SK-N-SH (cell line): ENCODE measurements at regions of chr20 and their contacts with region 1.

Region 1: GRCh38 chr20:5543385-5543784 is 206.8 kb upstream of the SHLD1 start:
- DNase-seq: no peak
- H3K4me3 ChIP-seq: no peak overlapping the region
- H3K27ac ChIP-seq: no peak overlapping the region
- H3K4me1 ChIP-seq: no peaks in the 10 kb centered on the region; a peak in 2 of 4 replicates
- H3K27me3 ChIP-seq: no peaks in the 10 kb centered on the region
- CTCF ChIP-seq: no peak
- EP300 ChIP-seq: no peak
- RAD21 ChIP-seq: no peak

Region 2: DNA sequence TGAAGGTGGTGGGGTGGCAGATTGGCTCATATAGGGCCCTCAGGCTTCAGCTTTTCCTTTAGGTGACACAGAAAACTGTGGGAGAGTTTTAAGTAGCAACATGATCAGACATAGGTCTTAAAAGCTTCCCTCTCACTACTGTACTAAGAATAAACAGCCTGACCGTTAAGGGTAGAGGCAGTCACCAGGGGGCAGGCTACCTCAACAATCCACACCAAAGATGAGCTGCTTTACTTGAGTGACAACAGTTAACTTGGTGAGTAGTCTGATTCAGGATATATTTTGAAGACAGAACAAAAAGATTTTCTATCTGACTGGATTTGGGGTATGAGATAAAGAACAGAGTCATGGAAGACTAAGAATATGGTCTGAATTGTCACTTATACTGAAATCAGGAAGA is 13.7 kb after region 1 on chr20:
- CTCF ChIA-PET with region 1: interaction called, 11 read pairs
- POLR2A ChIA-PET with region 1: no interaction called
- DNase-seq: peak; percentile 54
- H3K4me3 ChIP-seq: no peak overlapping the region; a peak in 1 of 4 replicates
- H3K27ac ChIP-seq: no peak overlapping the region
- H3K4me1 ChIP-seq: no peaks in the 10 kb centered on the region
- H3K27me3 ChIP-seq: no peaks in the 10 kb centered on the region
- CTCF ChIP-seq: peak; percentile 72
- EP300 ChIP-seq: no peak
- RAD21 ChIP-seq: peak; percentile 74